Heart left ventricle (tissue), 16 donors: ENCODE measurements at regions of chr19 and their contacts with region 1.

Region 1: DNA sequence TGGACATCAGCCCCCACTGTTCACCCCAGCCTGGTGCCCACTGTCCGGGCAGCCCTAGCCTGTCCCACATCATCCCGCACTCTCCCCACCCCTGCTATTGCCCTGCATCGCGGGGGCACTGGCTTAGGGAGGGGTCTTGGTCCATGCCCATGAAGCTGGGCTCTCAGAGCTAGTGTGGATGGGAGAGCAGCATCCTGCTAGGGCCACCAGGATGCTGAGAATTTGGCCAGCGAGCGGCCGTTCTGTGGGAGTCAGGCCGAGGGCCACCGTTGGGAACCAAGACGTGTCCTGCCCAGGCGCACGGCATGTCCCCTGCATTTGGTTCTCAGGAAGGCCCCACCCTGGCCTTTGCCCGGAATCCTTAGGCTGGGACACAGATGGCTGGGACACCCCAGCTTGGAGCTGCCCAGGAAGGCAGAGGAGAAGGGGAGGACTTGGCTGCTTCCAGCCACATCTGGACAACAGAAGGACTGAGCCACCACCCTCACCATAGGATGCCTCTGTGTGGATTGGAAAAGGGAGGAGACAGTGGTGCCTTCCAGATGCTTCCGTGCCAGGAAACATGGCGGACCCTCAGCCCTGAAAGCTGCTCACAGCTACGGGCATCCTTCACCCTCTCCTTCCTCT is 14.6 kb downstream of the ADGRE5 start:
- DNase-seq: no peak
- ATAC-seq: peak in 2 of 4 donors; percentile 18 to 23
- H3K4me3 ChIP-seq: no peak overlapping the region
- H3K27ac ChIP-seq: no peak overlapping the region
- H3K4me1 ChIP-seq: no peaks in the 10 kb centered on the region
- H3K27me3 ChIP-seq: no peaks in the 10 kb centered on the region
- CTCF ChIP-seq: no peak
- POLR2A ChIP-seq: no peak

Region 2: DNA sequence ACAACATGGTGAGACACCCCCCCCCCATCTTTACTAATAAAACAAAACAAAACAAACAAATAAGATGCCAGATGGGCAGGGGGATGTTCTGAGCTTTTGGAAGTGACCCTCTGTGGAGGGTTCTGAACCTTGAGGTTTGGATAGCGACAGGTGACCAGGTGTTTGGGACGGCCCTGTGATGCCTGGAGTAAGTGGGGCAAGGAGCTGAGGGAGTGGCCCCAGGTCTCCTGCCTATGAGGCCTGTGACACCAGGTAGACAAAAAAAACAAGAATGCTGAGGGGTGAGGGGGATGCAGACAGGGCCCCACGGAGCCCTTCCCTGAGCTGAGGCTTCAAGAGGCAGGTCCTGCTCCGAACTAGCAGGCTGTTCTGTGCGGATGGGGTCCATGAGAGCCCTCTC is 373.4 kb after region 1 on chr19:
- intact Hi-C with region 1: loop called in 1 of 10 experiments (anchors 5 kb)
- DNase-seq: no peak
- ATAC-seq: no peak
- H3K4me3 ChIP-seq: no peak overlapping the region
- H3K27ac ChIP-seq: no peak overlapping the region
- H3K4me1 ChIP-seq: no peaks in the 10 kb centered on the region
- H3K27me3 ChIP-seq: peaks cover 0 to 16% (median 0%) of the 10 kb centered on the region in 9 donors
- CTCF ChIP-seq: no peak
- POLR2A ChIP-seq: no peak